OCI-LY7 (cell line): ENCODE measurements at regions of chr2 and their contacts with region 1.

Region 1: GRCh38 chr2:218301176-218301819 is 9.0 kb upstream of the TMBIM1 start:
- DNase-seq: peak; percentile 95
- H3K4me3 ChIP-seq: no peak overlapping the region
- H3K27ac ChIP-seq: no peak overlapping the region
- H3K4me1 ChIP-seq: peaks cover 36% of the 10 kb centered on the region
- CTCF ChIP-seq: peak; percentile 96

Region 2: GRCh38 chr2:218360447-218360846 is 59.1 kb after region 1 on chr2:
- CTCF ChIA-PET with region 1: interaction called, 14 read pairs
- POLR2A ChIA-PET with region 1: interaction called, 4 read pairs
- intact Hi-C with region 1: loop called (anchors 1 kb)
- DNase-seq: no peak
- H3K4me3 ChIP-seq: no peak overlapping the region
- H3K27ac ChIP-seq: no peak overlapping the region
- H3K4me1 ChIP-seq: peaks cover 23% of the 10 kb centered on the region
- CTCF ChIP-seq: no peak

Region 3: DNA sequence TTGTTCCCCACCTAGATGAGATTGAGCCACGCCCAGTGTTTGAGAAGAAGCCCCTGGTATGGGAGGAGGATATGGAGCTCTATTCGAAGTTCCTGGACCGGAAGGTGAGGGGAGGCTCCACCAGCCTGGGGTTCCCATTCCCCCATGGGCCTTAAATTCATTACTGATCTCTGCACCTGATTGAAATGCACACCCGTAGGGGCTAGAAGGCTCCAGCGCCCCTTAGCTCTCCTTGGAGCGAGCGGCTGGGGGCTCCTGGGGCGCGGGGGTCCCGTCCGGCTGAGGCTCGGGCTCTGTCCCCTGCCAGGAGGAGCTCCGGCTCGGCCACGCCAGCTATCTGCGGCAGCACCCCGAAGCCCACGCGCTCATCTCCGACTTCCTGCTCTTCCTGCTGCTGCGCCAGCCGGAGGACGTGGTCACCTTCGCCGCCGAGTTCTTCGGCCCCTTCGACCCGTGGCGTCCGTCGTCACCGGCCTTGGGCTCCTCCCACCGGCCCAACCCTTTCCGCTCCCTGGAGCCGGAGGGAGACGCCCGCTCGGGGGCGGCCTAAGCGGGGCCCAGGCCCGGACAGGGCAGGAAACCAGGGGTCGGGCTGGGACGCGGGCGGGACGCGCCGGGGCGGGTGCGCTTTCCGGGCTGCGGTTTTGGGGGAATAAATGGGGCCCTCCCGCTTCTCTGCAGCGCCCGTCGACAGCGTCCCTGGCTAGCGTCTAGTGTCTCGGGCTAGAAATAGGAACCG is 66.3 kb after region 1 on chr2:
- CTCF ChIA-PET with region 1: no interaction called
- POLR2A ChIA-PET with region 1: interaction called, 4 read pairs
- intact Hi-C with region 1: loop called (anchors 1 kb)
- DNase-seq: peak; percentile 81
- H3K4me3 ChIP-seq: peak overlapping the region; percentile 68
- H3K27ac ChIP-seq: peak overlapping the region; percentile 40
- H3K4me1 ChIP-seq: peaks cover 66% of the 10 kb centered on the region
- CTCF ChIP-seq: peak; percentile 31; the same call in 1 of the 2 replicates

Region 4: GRCh38 chr2:218659258-218659987 is 358.1 kb after region 1 on chr2 and contains the starts of genes BCS1L and ZNF142:
- CTCF ChIA-PET with region 1: no interaction called
- POLR2A ChIA-PET with region 1: no interaction called
- intact Hi-C with region 1: no loop called
- DNase-seq: peak; percentile 93
- H3K4me3 ChIP-seq: peak within 1 kb of the TSS; percentile 87
- H3K27ac ChIP-seq: peak within 1 kb of the TSS; percentile 55
- H3K4me1 ChIP-seq: peaks cover 17% of the 10 kb centered on the region
- CTCF ChIP-seq: no peak
- total RNA-seq, gene BCS1L: 48.0 and 57.3 TPM in 2 replicates
- total RNA-seq, gene ZNF142: 29.9 and 37.6 TPM in 2 replicates